Caco-2 (cell line): ENCODE measurements at regions of chr18 and their contacts with region 1.

Region 1: DNA sequence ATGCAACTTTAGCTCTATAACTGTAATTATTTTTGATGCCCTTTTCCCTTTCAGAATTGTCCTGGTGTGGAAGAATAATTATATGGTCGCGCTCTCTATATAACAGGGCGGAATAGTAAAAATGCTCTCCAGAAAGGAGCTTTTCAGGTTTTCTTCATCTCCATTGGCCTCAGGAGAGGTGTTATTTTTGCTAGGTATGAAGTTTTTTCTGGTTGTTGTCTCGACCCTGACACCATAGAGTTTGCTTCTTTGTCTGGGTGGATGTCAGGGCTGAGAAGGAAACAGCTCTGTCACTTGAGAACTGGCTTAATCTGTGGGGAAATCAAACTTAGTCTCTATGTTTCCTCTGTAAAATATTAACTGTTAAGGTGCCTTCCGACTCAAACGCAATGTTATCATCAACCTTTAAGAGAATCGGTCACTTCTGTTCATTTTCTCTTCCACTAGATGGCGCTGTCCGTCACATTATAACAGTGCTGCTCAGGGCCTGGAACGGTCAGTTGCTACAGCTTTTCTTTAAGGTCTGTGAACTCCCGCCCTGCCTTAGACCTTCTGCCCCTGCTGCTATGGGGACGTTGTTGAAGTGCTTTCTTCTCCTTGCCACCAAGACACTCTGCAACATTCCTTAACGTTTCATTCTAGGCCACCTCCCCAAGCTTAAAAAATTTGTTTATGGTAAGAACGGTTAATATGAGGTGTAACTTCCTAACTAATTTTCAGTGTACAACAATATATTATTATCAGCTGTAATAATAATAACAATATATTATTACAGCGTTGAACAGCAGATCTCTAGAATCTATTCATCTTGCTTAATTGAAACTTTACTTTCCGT is 23.8 kb upstream of the SERPINB12 start:
- DNase-seq: peak; percentile 49 to 51
- H3K4me3 ChIP-seq: no peak overlapping the region
- H3K4me3 Mint-ChIP-seq: no peak overlapping the region
- H3K27ac Mint-ChIP-seq: no peak overlapping the region
- H3K4me1 ChIP-seq: no peaks in the 10 kb centered on the region
- H3K4me1 Mint-ChIP-seq: no peaks in the 10 kb centered on the region
- H3K27me3 ChIP-seq: no peaks in the 10 kb centered on the region
- H3K27me3 Mint-ChIP-seq: peaks cover 6% of the 10 kb centered on the region
- CTCF ChIP-seq: peak; percentile 22 to 40

Region 2: DNA sequence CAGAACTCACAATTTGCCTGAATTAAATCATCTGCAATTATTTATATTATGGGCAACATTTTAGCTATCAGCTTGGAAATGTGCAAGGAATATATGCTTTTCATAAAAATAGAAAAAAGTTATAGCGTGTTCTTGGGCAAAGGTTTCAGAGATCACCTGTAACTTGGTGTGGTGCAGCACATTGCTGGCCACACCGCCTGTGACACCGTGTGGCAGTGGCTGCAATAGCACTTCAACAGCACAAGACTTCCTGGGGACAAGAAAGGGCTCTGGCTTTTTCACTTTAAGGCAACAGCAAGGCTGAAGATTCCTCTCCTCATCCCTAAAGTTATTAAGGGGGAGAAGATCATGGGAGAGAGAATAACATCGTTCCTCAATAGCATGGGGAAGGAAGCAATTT is 158.1 kb after region 1 on chr18:
- CTCF ChIA-PET with region 1: no interaction called
- POLR2A ChIA-PET with region 1: no interaction called
- intact Hi-C with region 1: loop called (anchors 1 kb)
- DNase-seq: peak; percentile 16 to 29
- H3K4me3 ChIP-seq: no peak overlapping the region
- H3K4me3 Mint-ChIP-seq: no peak overlapping the region
- H3K27ac Mint-ChIP-seq: no peak overlapping the region
- H3K4me1 ChIP-seq: no peaks in the 10 kb centered on the region
- H3K4me1 Mint-ChIP-seq: no peaks in the 10 kb centered on the region
- H3K27me3 ChIP-seq: no peaks in the 10 kb centered on the region
- H3K27me3 Mint-ChIP-seq: peaks cover 4% of the 10 kb centered on the region
- CTCF ChIP-seq: peak; percentile 28 to 44

Region 3: GRCh38 chr18:63741769-63742168 is 223.4 kb after region 1 on chr18:
- CTCF ChIA-PET with region 1: interaction called, 5 read pairs
- POLR2A ChIA-PET with region 1: no interaction called
- intact Hi-C with region 1: loop called (anchors 1 kb)
- DNase-seq: no peak
- H3K4me3 ChIP-seq: no peak overlapping the region
- H3K4me3 Mint-ChIP-seq: no peak overlapping the region
- H3K27ac Mint-ChIP-seq: no peak overlapping the region
- H3K4me1 ChIP-seq: no peaks in the 10 kb centered on the region
- H3K4me1 Mint-ChIP-seq: no peaks in the 10 kb centered on the region
- H3K27me3 ChIP-seq: no peaks in the 10 kb centered on the region
- H3K27me3 Mint-ChIP-seq: no peaks in the 10 kb centered on the region
- CTCF ChIP-seq: peak in 1 of 2 experiments; percentile 7